ENCODE measurements at regions of chr3 and their contacts with region 1.

Region 1: DNA sequence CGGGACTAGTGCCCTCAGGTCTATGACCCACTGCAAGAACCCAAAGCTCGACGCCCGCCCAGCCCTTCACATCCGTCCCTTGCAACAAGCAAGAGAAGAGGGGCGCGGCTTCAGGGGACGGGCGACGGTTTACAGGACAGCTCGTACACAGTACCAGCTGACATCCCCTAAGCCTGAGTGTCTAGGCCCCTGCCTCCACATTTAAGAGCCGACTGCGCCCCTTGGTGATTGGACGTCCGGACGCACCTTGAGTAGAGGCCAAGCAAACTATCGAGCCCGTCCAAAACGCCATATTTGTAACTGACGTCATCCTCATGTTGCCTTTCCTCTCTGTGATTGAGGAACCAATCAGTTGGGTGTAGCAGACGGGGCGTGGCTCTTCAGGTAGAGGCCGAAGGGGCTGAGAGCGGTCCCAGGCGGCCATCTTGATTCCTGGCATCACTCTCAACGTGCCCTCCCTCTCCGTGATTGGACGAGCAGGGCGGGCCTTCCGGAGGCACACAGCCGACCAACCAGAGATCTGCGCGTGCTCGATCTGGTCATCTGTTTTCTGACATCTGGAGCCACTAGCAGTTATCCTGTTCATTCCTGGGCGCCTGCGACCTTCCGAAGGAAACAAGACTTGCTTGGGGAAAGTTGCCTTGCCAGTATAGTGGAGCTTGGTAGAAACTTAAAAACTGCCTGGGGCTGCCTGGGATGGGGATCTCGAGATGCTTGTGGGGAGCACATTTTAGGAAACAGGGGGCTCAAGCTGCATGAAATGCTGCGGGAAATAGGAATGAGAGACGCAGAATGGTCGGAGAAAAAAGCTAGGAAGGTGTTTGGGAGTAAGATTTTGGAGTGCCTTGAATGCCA is 4.0 kb upstream of the RPL14 start:
- DNase-seq: peak; percentile 96
- H3K4me3 Mint-ChIP-seq: peak overlapping the region; percentile 90
- H3K27ac Mint-ChIP-seq: peak overlapping the region; percentile 97
- H3K4me1 Mint-ChIP-seq: peaks cover 24% of the 10 kb centered on the region
- H3K27me3 Mint-ChIP-seq: no peaks in the 10 kb centered on the region

Region 2: GRCh38 chr3:39406368-39407258 is 1046.5 kb before region 1 on chr3 and contains the start of gene RPSA:
- intact Hi-C with region 1: loop called (anchors 5 kb)
- DNase-seq: peak; percentile 98
- H3K4me3 Mint-ChIP-seq: peak within 1 kb of the TSS; percentile 94
- H3K27ac Mint-ChIP-seq: peak within 1 kb of the TSS; percentile 98
- H3K4me1 Mint-ChIP-seq: peaks cover 40% of the 10 kb centered on the region
- H3K27me3 Mint-ChIP-seq: no peaks in the 10 kb centered on the region
- total RNA-seq, gene RPSA: 2,053 and 2,074 TPM in 2 replicates

Region 3: GRCh38 chr3:40337136-40338108 is 115.7 kb before region 1 on chr3:
- intact Hi-C with region 1: loop called (anchors 2 kb)
- DNase-seq: no peak
- H3K4me3 Mint-ChIP-seq: no peak overlapping the region
- H3K27ac Mint-ChIP-seq: peak overlapping the region; percentile 87
- H3K4me1 Mint-ChIP-seq: peaks cover 19% of the 10 kb centered on the region
- H3K27me3 Mint-ChIP-seq: peaks cover 2% of the 10 kb centered on the region

Region 4: GRCh38 chr3:40505599-40506462 is 52.7 kb after region 1 on chr3 and contains the start of gene ZNF620:
- intact Hi-C with region 1: no loop called
- DNase-seq: peak; percentile 28
- H3K4me3 Mint-ChIP-seq: peak within 1 kb of the TSS; percentile 87
- H3K27ac Mint-ChIP-seq: peak within 1 kb of the TSS; percentile 75
- H3K4me1 Mint-ChIP-seq: peaks cover 24% of the 10 kb centered on the region
- H3K27me3 Mint-ChIP-seq: no peaks in the 10 kb centered on the region
- total RNA-seq, gene ZNF620: 6.3 and 6.7 TPM in 2 replicates

Region 5: GRCh38 chr3:40524568-40525285 is 71.6 kb after region 1 on chr3 and contains the start of gene ZNF621:
- intact Hi-C with region 1: loop called (anchors 1 kb)
- DNase-seq: peak; percentile 80
- H3K4me3 Mint-ChIP-seq: peak within 1 kb of the TSS; percentile 95
- H3K27ac Mint-ChIP-seq: peak within 1 kb of the TSS; percentile 96
- H3K4me1 Mint-ChIP-seq: peaks cover 22% of the 10 kb centered on the region
- H3K27me3 Mint-ChIP-seq: no peaks in the 10 kb centered on the region
- total RNA-seq, gene ZNF621: 21.4 and 23.9 TPM in 2 replicates

Region 6: DNA sequence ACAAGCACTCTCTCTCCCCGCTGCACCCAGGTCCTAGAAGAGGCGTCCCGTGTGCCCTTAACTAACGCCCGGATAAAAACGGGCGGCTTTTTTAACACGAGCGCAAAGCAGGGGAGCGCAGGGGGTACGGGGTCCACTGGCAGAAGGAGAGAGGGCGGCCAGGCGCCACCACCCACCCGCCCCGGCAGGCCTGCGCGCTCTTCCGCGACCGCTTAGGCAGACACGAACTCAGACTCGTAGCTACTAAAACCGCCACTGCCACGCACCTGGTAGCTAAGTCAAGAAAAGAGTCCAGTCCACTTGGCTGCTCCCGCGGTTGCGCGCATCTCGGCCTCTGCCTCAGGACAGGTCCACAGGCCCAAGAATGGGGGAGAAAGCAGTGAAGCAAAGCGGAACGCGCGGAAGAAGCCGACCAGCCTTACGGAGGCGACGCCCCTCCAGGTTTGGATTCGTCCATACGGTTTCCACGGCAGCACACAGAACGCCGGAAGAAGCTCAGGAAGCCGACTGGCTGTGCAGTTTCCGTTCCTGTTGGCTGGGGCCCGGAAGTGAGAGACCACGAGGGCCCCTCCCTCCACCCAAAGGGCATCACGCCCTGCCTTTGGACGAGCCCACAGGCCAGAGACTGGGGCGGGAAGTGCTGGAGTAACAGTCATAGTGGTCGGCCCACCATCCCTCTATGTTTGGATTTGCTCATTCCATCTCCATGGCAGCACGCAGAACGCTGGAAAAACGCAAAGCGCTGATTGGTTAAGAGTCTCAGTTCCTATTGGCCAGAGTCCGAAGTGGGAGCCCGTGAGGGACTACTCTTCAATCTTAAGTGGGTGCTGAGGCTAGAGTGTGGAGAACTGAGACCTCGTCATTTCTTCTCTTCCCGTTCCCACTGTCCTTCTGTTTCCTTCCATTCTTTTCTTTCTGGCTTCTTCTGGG is 1508.9 kb after region 1 on chr3 and contains the start of gene ULK4:
- intact Hi-C with region 1: loop called (anchors 1 kb)
- DNase-seq: peak; percentile 94
- H3K4me3 Mint-ChIP-seq: peak within 1 kb of the TSS; percentile 96
- H3K27ac Mint-ChIP-seq: peak within 1 kb of the TSS; percentile 90
- H3K4me1 Mint-ChIP-seq: peaks cover 19% of the 10 kb centered on the region
- H3K27me3 Mint-ChIP-seq: peaks cover under 1% of the 10 kb centered on the region
- total RNA-seq, gene ULK4: 7.5 and 8.1 TPM in 2 replicates

Region 7: GRCh38 chr3:42090973-42091731 is 1638.0 kb after region 1 on chr3 and contains the start of gene TRAK1:
- intact Hi-C with region 1: loop called (anchors 10 kb)
- DNase-seq: no peak
- H3K4me3 Mint-ChIP-seq: no peak within 1 kb of the TSS
- H3K27ac Mint-ChIP-seq: peak within 1 kb of the TSS; percentile 64
- H3K4me1 Mint-ChIP-seq: peaks cover 53% of the 10 kb centered on the region
- H3K27me3 Mint-ChIP-seq: no peaks in the 10 kb centered on the region
- total RNA-seq, gene TRAK1: 37.8 and 40.9 TPM in 2 replicates

Measured in activated T-helper 2 cell treated with anti-CD3 and anti-CD28 coated beads, Interferon-gamma antibody, Interleukin-2, Interleukin-4, amounts not matched to agents 10 μg/mL and 5 μg/mL and 100 μg/mL, durations not matched to agents 14 hours and 24 hours and 36 hours (primary cell).